H1 (cell line): ENCODE measurements at regions of chr5 and their contacts with region 1.

Region 1: DNA sequence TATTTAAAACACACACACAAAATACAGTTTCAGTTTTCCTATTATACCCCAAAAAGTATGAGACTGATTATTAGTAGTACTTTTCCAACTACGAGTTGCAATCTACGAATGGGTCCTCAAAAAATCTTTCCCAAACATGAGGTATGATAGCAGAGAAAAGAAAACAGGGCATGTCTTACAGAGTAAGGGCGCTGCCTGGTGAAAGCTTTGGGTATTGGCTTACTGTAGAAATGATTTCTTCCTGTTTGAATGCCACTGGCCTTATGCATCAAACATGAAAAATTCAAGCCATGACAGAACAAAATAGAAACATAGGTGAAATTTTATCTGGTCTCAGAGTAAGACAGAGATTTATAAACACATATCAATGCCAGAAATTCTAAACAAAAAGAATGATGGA is 448.0 kb downstream of the SPOCK1 start:
- DNase-seq: no peak
- H3K4me3 ChIP-seq: no peak overlapping the region
- H3K27ac ChIP-seq: no peak overlapping the region
- H3K4me1 ChIP-seq: no peaks in the 10 kb centered on the region
- H3K27me3 ChIP-seq: no peaks in the 10 kb centered on the region
- CTCF ChIP-seq: peak in 2 of 3 experiments; percentile 49 to 74; a peak in 2 of 4 replicates
- EP300 ChIP-seq: no peak
- POLR2A ChIP-seq: no peak
- RAD21 ChIP-seq: peak; percentile 87 to 93

Region 2: DNA sequence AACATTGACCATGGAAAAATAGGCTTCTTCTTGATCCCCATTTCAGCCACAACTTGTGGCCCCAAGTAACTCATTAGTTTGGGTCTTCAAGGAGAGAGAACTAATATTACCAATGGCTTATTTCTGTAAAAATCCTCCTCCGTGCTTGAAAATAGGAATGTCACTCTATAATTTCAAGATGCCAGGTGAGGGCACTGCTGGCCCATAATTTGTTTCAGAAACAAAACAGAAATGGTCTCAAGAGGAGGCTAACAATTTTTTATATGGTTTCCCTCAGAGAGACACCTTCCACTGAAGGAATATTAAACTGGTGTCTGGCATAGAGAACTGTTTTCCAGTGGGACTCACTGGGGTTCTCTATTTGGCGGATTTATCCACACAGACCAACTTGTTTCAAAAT is 248.8 kb before region 1 on chr5:
- CTCF ChIA-PET with region 1: interaction called, 12 read pairs
- POLR2A ChIA-PET with region 1: interaction called, 5 read pairs
- DNase-seq: no peak
- H3K4me3 ChIP-seq: no peak overlapping the region
- H3K27ac ChIP-seq: no peak overlapping the region
- H3K4me1 ChIP-seq: no peaks in the 10 kb centered on the region
- H3K27me3 ChIP-seq: no peaks in the 10 kb centered on the region
- CTCF ChIP-seq: peak in 2 of 3 experiments; percentile 37 to 55; a peak in 3 of 4 replicates
- EP300 ChIP-seq: no peak
- POLR2A ChIP-seq: no peak
- RAD21 ChIP-seq: peak; percentile 82 to 84

Region 3: DNA sequence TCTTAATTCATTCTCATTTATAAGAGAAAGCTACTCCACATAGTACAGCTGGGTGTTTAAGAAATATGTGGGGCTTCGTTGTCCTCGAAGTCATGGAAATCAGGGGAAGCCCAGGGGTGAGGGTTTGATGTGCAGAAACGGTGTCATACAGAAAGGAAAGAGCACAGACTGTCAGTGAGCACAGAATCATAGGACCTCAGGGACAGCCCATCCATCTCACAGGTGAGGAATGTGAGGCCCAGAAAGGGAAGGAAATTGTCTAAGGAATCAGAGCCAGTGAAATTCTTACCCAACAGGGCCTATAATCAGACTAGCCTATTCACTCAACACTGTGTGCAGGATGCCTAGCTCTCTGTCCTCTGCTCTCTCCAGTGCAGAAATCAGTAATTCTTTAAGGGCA is 87.7 kb before region 1 on chr5:
- CTCF ChIA-PET with region 1: no interaction called
- POLR2A ChIA-PET with region 1: no interaction called
- DNase-seq: no peak
- H3K4me3 ChIP-seq: no peak overlapping the region
- H3K27ac ChIP-seq: no peak overlapping the region
- H3K4me1 ChIP-seq: peaks cover 0 to 2% (median 0%) of the 10 kb centered on the region in 4 experiments; a peak in 1 of 7 replicates
- H3K27me3 ChIP-seq: no peaks in the 10 kb centered on the region
- CTCF ChIP-seq: no peak
- EP300 ChIP-seq: no peak
- POLR2A ChIP-seq: no peak
- RAD21 ChIP-seq: no peak